K562 (cell line): ENCODE measurements at regions of chr5 and their contacts with region 1.

Region 1: DNA sequence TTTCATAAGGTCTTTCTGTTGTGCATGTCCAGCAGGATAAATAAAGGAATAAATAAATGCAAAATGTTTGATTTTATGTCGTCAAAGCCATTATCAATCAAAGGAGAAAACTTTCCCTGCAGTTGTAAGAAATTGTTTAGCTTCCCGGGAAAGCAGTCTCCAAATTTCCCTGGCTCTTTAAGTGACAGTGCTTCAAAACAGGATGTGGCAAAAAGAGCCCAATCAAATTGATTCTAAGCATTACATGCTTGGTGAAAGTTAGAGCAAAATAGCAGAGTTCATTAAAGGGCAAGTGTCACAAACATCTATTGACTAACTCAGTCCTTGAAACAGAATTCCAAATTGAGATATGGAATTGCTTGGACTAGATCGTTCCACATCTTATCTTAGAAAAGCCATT is 704.1 kb downstream of the PRELID2 start:
- DNase-seq: no peak
- ATAC-seq: no peak
- H3K4me3 ChIP-seq: no peak overlapping the region
- H3K27ac ChIP-seq: no peak overlapping the region
- H3K4me1 ChIP-seq: no peaks in the 10 kb centered on the region
- H3K27me3 ChIP-seq: no peaks in the 10 kb centered on the region
- CTCF ChIP-seq: no peak
- EP300 ChIP-seq: no peak
- POLR2A ChIP-seq: no peak
- RAD21 ChIP-seq: no peak

Region 2: GRCh38 chr5:144958002-144958401 is 173.0 kb before region 1 on chr5:
- CTCF ChIA-PET with region 1: no interaction called
- POLR2A ChIA-PET with region 1: no interaction called
- in situ Hi-C with region 1: no loop called
- intact Hi-C with region 1: no loop called
- DNase-seq: no peak
- ATAC-seq: no peak
- H3K4me3 ChIP-seq: no peak overlapping the region
- H3K27ac ChIP-seq: no peak overlapping the region
- H3K4me1 ChIP-seq: no peaks in the 10 kb centered on the region
- H3K27me3 ChIP-seq: no peaks in the 10 kb centered on the region
- CTCF ChIP-seq: no peak
- EP300 ChIP-seq: no peak
- POLR2A ChIP-seq: no peak
- RAD21 ChIP-seq: no peak

Region 3: DNA sequence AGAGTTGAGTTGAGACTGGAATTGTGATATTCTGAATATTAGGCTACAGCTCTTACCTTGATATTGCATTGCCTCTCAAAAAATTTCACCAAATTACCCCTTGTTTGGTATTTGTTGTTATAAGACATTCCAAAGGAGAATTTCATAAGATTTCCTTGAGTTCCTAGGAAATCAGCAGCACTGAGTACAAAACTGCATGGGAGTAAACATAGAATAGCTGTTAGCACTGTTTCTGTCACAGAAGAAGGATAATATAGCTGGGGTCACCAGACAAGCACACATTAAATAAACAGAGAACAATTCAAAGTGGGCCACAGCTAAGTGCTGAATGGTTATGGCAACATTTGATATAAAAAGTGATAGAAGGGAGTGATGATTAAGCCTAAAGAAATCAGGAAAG is 20.2 kb before region 1 on chr5:
- CTCF ChIA-PET with region 1: no interaction called
- POLR2A ChIA-PET with region 1: no interaction called
- in situ Hi-C with region 1: no loop called
- intact Hi-C with region 1: no loop called
- DNase-seq: no peak
- ATAC-seq: no peak
- H3K4me3 ChIP-seq: no peak overlapping the region
- H3K27ac ChIP-seq: no peak overlapping the region
- H3K4me1 ChIP-seq: no peaks in the 10 kb centered on the region
- H3K27me3 ChIP-seq: no peaks in the 10 kb centered on the region
- CTCF ChIP-seq: no peak
- EP300 ChIP-seq: no peak
- POLR2A ChIP-seq: no peak
- RAD21 ChIP-seq: no peak

Region 4: DNA sequence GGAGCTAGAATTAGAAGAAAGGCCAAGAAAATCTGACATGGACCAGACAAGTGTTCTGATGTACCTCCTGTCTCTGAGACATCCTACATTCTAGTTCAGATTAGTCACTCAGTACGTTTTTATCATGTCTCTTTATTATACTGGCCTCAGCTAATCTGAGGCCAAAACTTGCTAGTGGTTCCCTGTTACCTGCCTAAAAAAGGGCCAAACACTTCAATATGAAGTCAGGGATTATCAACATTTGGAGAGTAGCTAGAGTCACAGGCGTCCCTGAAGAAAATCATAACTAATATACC is 116.7 kb after region 1 on chr5:
- CTCF ChIA-PET with region 1: no interaction called
- POLR2A ChIA-PET with region 1: no interaction called
- in situ Hi-C with region 1: no loop called
- intact Hi-C with region 1: no loop called
- DNase-seq: no peak
- ATAC-seq: no peak
- H3K4me3 ChIP-seq: no peak overlapping the region
- H3K27ac ChIP-seq: no peak overlapping the region
- H3K4me1 ChIP-seq: no peaks in the 10 kb centered on the region
- H3K27me3 ChIP-seq: no peaks in the 10 kb centered on the region
- CTCF ChIP-seq: no peak
- EP300 ChIP-seq: no peak
- POLR2A ChIP-seq: no peak
- RAD21 ChIP-seq: no peak

Region 5: DNA sequence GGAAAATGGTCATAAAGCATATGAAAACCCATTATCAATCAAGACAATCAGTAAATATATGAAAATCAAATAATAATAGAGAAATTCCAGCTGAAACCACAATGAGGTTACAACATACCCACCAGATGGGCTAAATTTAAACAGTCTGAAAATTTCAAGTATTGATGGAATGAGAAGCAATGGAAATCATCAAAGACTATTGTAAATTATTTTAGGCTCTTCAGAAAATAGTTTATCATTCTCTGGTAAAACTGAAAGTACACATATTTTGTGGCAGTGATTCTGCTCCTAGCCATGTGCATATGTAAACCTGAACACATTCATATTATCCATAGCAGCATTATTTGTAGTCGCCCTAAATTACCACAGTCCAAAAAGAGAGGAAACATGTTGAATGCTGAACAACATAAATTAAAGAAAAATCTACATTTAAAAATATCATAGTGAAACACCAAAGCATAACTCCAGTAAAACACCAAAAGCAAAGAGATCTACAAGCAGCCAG is 488.9 kb after region 1 on chr5:
- CTCF ChIA-PET with region 1: no interaction called
- POLR2A ChIA-PET with region 1: no interaction called
- in situ Hi-C with region 1: no loop called
- intact Hi-C with region 1: loop called (anchors 10 kb)
- DNase-seq: no peak
- ATAC-seq: no peak
- H3K4me3 ChIP-seq: no peak overlapping the region
- H3K27ac ChIP-seq: no peak overlapping the region
- H3K4me1 ChIP-seq: no peaks in the 10 kb centered on the region
- H3K27me3 ChIP-seq: no peaks in the 10 kb centered on the region
- CTCF ChIP-seq: no peak
- EP300 ChIP-seq: no peak
- POLR2A ChIP-seq: no peak
- RAD21 ChIP-seq: no peak